ENCODE measurements at regions of chr17 and their contacts with region 1.

Region 1: GRCh38 chr17:49997791-49998703 is 3.0 kb upstream of the DLX3 start:
- DNase-seq: peak; percentile 78 to 90 (median 79)
- H3K4me3 ChIP-seq: no peak overlapping the region
- H3K27ac ChIP-seq: no peak overlapping the region
- H3K4me1 ChIP-seq: peaks cover 19 to 28% of the 10 kb centered on the region in 2 donors
- H3K27me3 ChIP-seq: peaks cover 65% of the 10 kb centered on the region
- CTCF ChIP-seq: peak; percentile 91 to 96 (median 94)
- POLR2A ChIP-seq: no peak

Region 2: DNA sequence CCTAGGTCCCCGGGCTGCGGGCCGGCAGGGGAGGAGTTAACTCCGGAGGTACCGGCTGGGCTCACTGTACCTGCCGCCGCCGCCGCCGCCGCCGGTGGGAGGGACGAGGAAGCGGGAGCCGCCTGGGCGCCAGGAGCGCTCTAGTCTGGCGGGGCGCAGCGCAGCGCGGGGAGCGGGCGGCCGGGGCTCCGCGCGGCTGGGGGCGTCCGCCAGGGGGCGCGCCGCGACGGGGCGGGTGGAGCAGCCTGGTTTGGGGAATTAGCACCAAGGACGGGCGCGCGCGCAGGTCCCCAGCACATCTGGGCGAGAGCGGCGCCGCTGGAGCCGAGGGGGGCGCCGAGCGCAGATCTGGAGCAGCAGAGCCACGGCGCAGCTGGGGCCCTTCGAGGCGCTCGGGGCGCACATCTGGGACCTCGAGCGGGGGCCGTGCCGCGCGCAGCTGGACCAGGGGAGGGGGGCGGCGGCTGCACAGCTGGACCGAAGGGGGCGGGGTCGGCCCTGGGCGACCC is 422.4 kb before region 1 on chr17 and contains the start of gene NXPH3:
- intact Hi-C with region 1: loop called in 1 of 2 experiments (anchors 10 kb)
- DNase-seq: peak in 4 of 7 donors; percentile 47 to 58 (median 49)
- H3K4me3 ChIP-seq: peak within 1 kb of the TSS in 3 of 4 donors; percentile 7 to 68 (median 11)
- H3K27ac ChIP-seq: peak within 1 kb of the TSS in 2 of 5 donors; percentile 38 to 45
- H3K4me1 ChIP-seq: peaks cover 4 to 9% of the 10 kb centered on the region in 2 donors
- H3K27me3 ChIP-seq: peaks cover 6% of the 10 kb centered on the region
- CTCF ChIP-seq: peak in 3 of 6 experiments; percentile 58 to 81 (median 67)
- POLR2A ChIP-seq: no peak
- total RNA-seq, gene NXPH3: 0.30 to 6.1 (median 1.3) TPM

Region 3: GRCh38 chr17:49862781-49863331 is 135.2 kb before region 1 on chr17:
- intact Hi-C with region 1: loop called in 1 of 2 experiments (anchors 2 kb)
- DNase-seq: peak in 1 of 7 donors; percentile 46
- H3K4me3 ChIP-seq: no peak overlapping the region
- H3K27ac ChIP-seq: no peak overlapping the region
- H3K4me1 ChIP-seq: peaks cover 0 to 5% of the 10 kb centered on the region in 2 donors
- H3K27me3 ChIP-seq: no peaks in the 10 kb centered on the region
- CTCF ChIP-seq: no peak
- POLR2A ChIP-seq: no peak

Region 4: DNA sequence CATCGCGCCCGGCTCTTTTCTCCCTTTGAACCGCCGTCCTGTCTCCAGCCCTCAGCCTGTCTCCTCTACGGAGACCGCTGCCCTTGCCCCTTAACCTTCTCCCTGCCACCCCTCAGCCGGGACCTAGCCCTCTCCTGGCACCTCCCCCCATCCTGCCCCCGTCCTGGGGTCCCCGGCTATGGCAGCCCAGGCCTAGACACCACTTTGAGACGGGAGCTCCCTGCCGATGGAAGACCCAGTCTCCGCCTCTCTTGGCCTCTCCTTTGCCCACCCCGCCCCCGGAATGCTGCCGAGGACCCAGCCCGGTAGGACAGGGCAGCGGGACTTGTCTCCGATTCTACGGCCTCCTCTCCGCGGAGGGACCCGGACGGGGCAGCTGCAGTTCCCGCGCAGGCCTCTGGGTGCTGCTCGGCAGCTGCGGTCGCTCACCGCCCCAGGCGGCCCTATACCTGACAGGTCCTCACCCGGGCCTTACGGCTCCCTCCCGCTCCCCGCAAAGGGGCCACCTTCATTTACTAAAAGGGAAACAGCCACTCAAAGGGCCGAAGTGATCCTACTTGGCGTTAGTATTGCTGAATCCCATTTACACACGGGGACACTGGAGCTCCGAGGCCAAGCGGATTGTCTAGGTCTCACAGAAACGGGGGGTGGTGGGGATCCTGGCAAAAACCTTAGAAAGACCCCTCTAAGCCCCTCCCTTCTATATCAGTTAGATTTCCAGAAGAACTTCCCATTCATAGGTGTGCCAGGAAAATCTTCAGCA is 117.6 kb before region 1 on chr17:
- intact Hi-C with region 1: loop called in 1 of 2 experiments (anchors 5 kb)
- DNase-seq: peak; percentile 65 to 83 (median 77)
- H3K4me3 ChIP-seq: no peak overlapping the region
- H3K27ac ChIP-seq: no peak overlapping the region
- H3K4me1 ChIP-seq: no peaks in the 10 kb centered on the region
- H3K27me3 ChIP-seq: peaks cover 22% of the 10 kb centered on the region
- CTCF ChIP-seq: peak; percentile 85 to 98 (median 92)
- POLR2A ChIP-seq: no peak

Region 5: DNA sequence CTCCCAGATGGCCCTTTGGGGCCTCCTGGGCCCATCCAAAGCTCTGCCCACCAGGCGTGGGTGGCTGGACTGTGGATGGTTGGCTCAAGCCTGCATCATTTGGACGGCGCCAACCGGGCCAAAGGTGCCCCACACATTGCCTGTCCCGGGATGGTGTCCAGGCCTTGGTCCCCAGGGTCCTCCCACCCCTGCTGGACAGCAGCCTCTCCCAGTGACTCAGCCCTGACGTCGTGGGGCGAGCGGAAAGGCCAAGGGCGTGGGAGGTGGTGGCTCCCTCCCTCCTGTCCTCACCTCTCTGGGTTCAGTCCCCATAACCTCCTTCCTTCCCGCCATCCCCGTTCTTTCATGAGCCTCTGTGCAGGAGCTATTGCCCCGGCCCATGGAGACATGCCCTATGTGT is 71.2 kb before region 1 on chr17:
- intact Hi-C with region 1: no loop called
- DNase-seq: peak; percentile 67 to 88 (median 74)
- H3K4me3 ChIP-seq: no peak overlapping the region
- H3K27ac ChIP-seq: no peak overlapping the region
- H3K4me1 ChIP-seq: peaks cover 0 to 5% of the 10 kb centered on the region in 2 donors
- H3K27me3 ChIP-seq: no peaks in the 10 kb centered on the region
- CTCF ChIP-seq: no peak
- POLR2A ChIP-seq: no peak

Region 6: GRCh38 chr17:49959183-49959935 is 38.7 kb before region 1 on chr17:
- intact Hi-C with region 1: loop called in 1 of 2 experiments (anchors 5 kb)
- DNase-seq: no peak
- H3K4me3 ChIP-seq: no peak overlapping the region
- H3K27ac ChIP-seq: no peak overlapping the region
- H3K4me1 ChIP-seq: peaks cover 0 to 2% of the 10 kb centered on the region in 2 donors
- H3K27me3 ChIP-seq: peaks cover 29% of the 10 kb centered on the region
- CTCF ChIP-seq: no peak
- POLR2A ChIP-seq: no peak

Measured in adrenal gland (tissue), 19 donors.